Motor neuron (in vitro differentiated cells): ENCODE measurements at regions of chr7 and their contacts with region 1.

Region 1: GRCh38 chr7:121366852-121367431 is 29.2 kb downstream of the FAM3C start:
- ATAC-seq: no peak
- H3K4me3 ChIP-seq: no peak overlapping the region
- H3K27ac ChIP-seq: no peak overlapping the region
- H3K4me1 ChIP-seq: no peaks in the 10 kb centered on the region

Region 2: DNA sequence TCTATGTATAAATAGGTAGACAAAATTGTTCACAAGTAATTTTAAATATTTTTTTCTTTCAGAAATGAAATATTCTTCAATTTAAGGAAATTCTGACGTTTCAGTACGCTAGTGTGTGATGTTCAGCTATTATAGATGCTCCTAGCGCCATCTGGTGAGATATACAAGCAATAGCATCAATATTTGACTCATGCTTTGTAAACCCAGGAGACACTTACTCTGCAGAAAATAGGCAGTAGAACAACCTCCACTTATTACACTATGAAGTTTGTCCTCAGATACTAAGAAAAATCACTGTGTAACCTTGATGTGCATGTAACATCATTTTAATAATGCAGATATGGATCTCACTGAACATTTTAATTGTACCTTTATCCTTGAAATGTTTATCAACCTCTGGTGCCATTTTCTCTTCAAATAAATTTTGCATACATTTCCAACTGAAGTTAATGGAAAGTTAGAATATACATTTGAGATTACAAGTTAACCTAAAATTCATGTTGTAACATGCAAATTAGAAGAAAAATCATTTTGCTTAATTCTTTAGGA is 180.7 kb after region 1 on chr7:
- in situ Hi-C with region 1: loop called in 4 of 9 experiments (anchors 10 to 25 kb)
- ATAC-seq: peak in 7 of 8 experiments; percentile 65 to 90 (median 78)
- H3K4me3 ChIP-seq: no peak overlapping the region
- H3K27ac ChIP-seq: no peak overlapping the region
- H3K4me1 ChIP-seq: no peaks in the 10 kb centered on the region

Region 3: DNA sequence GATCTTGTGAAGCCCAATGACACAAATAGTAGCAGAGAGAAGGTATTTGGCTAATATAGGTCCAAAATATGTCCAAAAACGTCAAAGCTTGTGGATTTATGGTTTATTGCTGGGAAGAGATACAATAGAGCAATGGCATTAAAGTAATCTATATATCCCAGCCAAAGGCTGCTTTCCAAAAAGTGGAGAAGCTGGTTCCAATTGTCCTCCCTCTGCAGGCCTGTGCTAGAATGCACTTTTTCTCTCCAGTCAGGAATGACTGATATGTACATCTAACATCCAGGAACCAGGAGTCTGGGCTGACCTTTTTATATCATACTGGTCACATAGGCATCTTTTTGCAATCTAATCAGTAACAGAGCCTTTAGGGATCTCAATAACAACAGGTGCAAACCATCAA is 196.2 kb after region 1 on chr7:
- in situ Hi-C with region 1: loop called in 1 of 9 experiments (anchors 10 kb)
- ATAC-seq: peak in 2 of 8 experiments; percentile 28 to 41
- H3K4me3 ChIP-seq: no peak overlapping the region
- H3K27ac ChIP-seq: no peak overlapping the region
- H3K4me1 ChIP-seq: no peaks in the 10 kb centered on the region

Region 4: GRCh38 chr7:121620206-121620605 is 253.3 kb after region 1 on chr7:
- in situ Hi-C with region 1: no loop called
- ATAC-seq: no peak
- H3K4me3 ChIP-seq: no peak overlapping the region
- H3K27ac ChIP-seq: no peak overlapping the region
- H3K4me1 ChIP-seq: no peaks in the 10 kb centered on the region

Region 5: DNA sequence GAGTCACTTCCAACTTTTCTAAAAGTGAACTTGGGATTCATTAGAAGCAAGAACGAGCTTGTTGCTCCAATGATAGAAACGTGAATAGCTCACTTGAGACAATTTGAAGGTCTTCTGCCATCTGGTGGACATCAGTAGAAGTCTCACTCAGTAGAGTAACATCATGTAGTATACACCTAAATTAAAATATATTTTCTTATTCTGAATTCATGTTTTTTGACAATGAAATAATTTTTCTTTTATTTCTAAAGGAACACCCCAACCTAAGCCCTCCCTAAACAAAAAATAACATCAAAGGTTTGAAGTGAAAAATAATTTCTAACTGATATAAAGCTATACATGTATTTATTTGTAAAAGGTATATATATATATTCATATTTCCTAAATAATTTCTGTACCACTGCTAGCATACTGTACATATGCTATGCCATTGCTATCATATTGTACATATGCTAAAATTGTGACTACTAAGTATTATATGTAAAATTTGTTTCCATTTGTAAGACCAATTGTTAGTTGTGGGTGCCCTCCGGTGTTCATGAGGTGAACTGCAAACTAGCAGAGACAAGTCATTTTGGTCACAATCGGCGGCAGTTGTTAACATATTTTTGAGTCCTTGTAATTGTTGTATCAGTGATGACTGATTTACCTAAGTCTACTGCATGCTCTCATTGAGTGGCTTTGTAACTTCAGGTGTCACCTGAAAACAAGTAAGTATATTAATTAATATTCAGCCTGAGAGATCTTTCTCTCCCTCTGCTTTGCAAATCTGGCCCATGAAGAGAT is 627.9 kb after region 1 on chr7:
- in situ Hi-C with region 1: loop called in 5 of 9 experiments (anchors 10 to 25 kb)
- ATAC-seq: peak; percentile 55 to 95 (median 76)
- H3K4me3 ChIP-seq: no peak overlapping the region
- H3K27ac ChIP-seq: no peak overlapping the region
- H3K4me1 ChIP-seq: no peaks in the 10 kb centered on the region